Prostate gland (tissue), 2 donors: ENCODE measurements at regions of chr9 and their contacts with region 1.

Region 1: GRCh38 chr9:120936011-120936763 is 9.6 kb upstream of the TRAF1 start:
- DNase-seq: peak; percentile 94
- H3K4me3 ChIP-seq: no peak overlapping the region
- H3K27ac ChIP-seq: peak overlapping the region; percentile 80 to 84
- H3K4me1 ChIP-seq: peaks cover 16% of the 10 kb centered on the region
- H3K27me3 ChIP-seq: no peaks in the 10 kb centered on the region
- CTCF ChIP-seq: peak; percentile 81 to 93 (median 92)
- POLR2A ChIP-seq: no peak

Region 2: GRCh38 chr9:120774722-120775121 is 161.5 kb before region 1 on chr9:
- intact Hi-C with region 1: no loop called
- DNase-seq: no peak
- H3K4me3 ChIP-seq: no peak overlapping the region
- H3K27ac ChIP-seq: no peak overlapping the region
- H3K4me1 ChIP-seq: peaks cover 18% of the 10 kb centered on the region
- H3K27me3 ChIP-seq: no peaks in the 10 kb centered on the region
- CTCF ChIP-seq: no peak
- POLR2A ChIP-seq: no peak

Region 3: GRCh38 chr9:120868676-120869359 is 67.4 kb before region 1 on chr9:
- intact Hi-C with region 1: loop called (anchors 2 kb)
- DNase-seq: peak; percentile 96
- H3K4me3 ChIP-seq: peak overlapping the region; percentile 36 to 46
- H3K27ac ChIP-seq: peak overlapping the region; percentile 80 to 82
- H3K4me1 ChIP-seq: no peaks in the 10 kb centered on the region
- H3K27me3 ChIP-seq: no peaks in the 10 kb centered on the region
- CTCF ChIP-seq: peak; percentile 19 to 70 (median 64)
- POLR2A ChIP-seq: peak; percentile 74

Region 4: GRCh38 chr9:120875954-120876841 is 60.0 kb before region 1 on chr9:
- intact Hi-C with region 1: loop called (anchors 2 kb)
- DNase-seq: peak; percentile 64
- H3K4me3 ChIP-seq: peak overlapping the region; percentile 52 to 63
- H3K27ac ChIP-seq: peak overlapping the region; percentile 91 to 92
- H3K4me1 ChIP-seq: no peaks in the 10 kb centered on the region
- H3K27me3 ChIP-seq: no peaks in the 10 kb centered on the region
- CTCF ChIP-seq: peak in 2 of 4 experiments; percentile 2 to 13
- POLR2A ChIP-seq: peak; percentile 36

Region 5: GRCh38 chr9:121074635-121075385 is 138.6 kb after region 1 on chr9 and contains the start of gene CNTRL:
- intact Hi-C with region 1: loop called (anchors 10 kb)
- DNase-seq: peak; percentile 87
- H3K4me3 ChIP-seq: peak within 1 kb of the TSS; percentile 65 to 74
- H3K27ac ChIP-seq: peak within 1 kb of the TSS; percentile 88 to 92
- H3K4me1 ChIP-seq: peaks cover 5% of the 10 kb centered on the region
- H3K27me3 ChIP-seq: no peaks in the 10 kb centered on the region
- CTCF ChIP-seq: peak in 2 of 4 experiments; percentile 3 to 13
- POLR2A ChIP-seq: peak; percentile 47
- total RNA-seq, gene CNTRL: 10.3 to 21.9 TPM

Region 6: GRCh38 chr9:121278535-121279261 is 342.5 kb after region 1 on chr9:
- intact Hi-C with region 1: no loop called
- DNase-seq: peak; percentile 39
- H3K4me3 ChIP-seq: no peak overlapping the region
- H3K27ac ChIP-seq: peak overlapping the region; percentile 85 to 90
- H3K4me1 ChIP-seq: no peaks in the 10 kb centered on the region
- H3K27me3 ChIP-seq: no peaks in the 10 kb centered on the region
- CTCF ChIP-seq: peak; percentile 45 to 90 (median 71)
- POLR2A ChIP-seq: peak; percentile 35

Region 7: GRCh38 chr9:121350993-121351561 is 414.9 kb after region 1 on chr9:
- intact Hi-C with region 1: no loop called
- DNase-seq: peak; percentile 80
- H3K4me3 ChIP-seq: no peak overlapping the region
- H3K27ac ChIP-seq: peak overlapping the region; percentile 50 to 71
- H3K4me1 ChIP-seq: peaks cover 6% of the 10 kb centered on the region
- H3K27me3 ChIP-seq: no peaks in the 10 kb centered on the region
- CTCF ChIP-seq: no peak
- POLR2A ChIP-seq: no peak